Calu3 (cell line): ENCODE measurements at regions of chr12 and their contacts with region 1.

Region 1: DNA sequence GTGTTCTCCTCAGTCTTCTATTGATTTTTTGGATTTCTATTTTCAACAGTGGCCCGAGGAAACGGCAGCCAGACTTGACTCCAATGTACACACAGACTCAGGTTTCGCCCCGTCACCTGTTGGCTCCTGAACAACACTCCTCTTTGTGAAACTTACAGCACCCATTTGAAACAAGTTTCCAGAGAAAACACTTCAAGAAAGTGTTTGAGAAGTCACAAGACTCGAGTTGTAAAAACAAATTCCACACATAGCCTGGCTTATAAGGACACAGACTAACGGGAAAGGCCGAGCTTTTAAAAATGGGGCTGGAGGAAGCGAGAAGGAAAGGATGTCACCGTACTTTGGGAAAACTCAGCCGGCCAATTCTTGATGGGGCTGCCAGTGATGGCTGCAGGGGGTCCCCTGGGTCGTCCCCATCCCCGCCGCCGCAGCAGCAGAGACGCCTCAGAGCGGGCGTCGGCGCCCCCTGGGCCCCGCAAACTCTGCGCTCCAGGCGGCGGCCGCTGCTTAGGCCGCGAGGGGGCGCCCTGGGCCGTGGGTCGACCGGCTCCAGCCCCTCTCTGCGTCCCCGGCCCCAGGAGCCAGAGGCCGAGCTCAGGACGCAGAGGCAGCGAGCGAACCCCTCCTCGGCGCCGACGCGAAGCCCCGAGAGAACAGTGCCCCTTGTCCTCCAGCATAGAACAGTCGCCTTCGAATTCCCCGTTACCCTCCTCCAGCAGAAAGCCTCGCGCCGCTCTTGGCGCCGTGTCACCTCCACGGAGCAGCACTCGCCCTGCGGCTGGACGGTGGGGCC is 106.9 kb downstream of the PRICKLE1 start:
- DNase-seq: peak; percentile 86
- H3K4me3 Mint-ChIP-seq: peak overlapping the region; percentile 96
- H3K27ac Mint-ChIP-seq: peak overlapping the region; percentile 66
- H3K4me1 Mint-ChIP-seq: peaks cover 9% of the 10 kb centered on the region
- H3K27me3 Mint-ChIP-seq: no peaks in the 10 kb centered on the region
- CTCF ChIP-seq: peak; percentile 59

Region 2: GRCh38 chr12:42504049-42504448 is 21.4 kb after region 1 on chr12:
- CTCF ChIA-PET with region 1: no interaction called
- intact Hi-C with region 1: no loop called
- DNase-seq: peak; percentile 4
- H3K4me3 Mint-ChIP-seq: no peak overlapping the region
- H3K27ac Mint-ChIP-seq: no peak overlapping the region
- H3K4me1 Mint-ChIP-seq: no peaks in the 10 kb centered on the region
- H3K27me3 Mint-ChIP-seq: no peaks in the 10 kb centered on the region
- CTCF ChIP-seq: no peak

Region 3: GRCh38 chr12:42524716-42525115 is 42.1 kb after region 1 on chr12:
- CTCF ChIA-PET with region 1: no interaction called
- intact Hi-C with region 1: no loop called
- DNase-seq: no peak
- H3K4me3 Mint-ChIP-seq: no peak overlapping the region
- H3K27ac Mint-ChIP-seq: no peak overlapping the region
- H3K4me1 Mint-ChIP-seq: no peaks in the 10 kb centered on the region
- H3K27me3 Mint-ChIP-seq: no peaks in the 10 kb centered on the region
- CTCF ChIP-seq: no peak

Region 4: GRCh38 chr12:42568952-42569915 is 86.6 kb after region 1 on chr12:
- CTCF ChIA-PET with region 1: interaction called, 20 read pairs
- intact Hi-C with region 1: loop called (anchors 2 kb)
- DNase-seq: no peak
- H3K4me3 Mint-ChIP-seq: no peak overlapping the region
- H3K27ac Mint-ChIP-seq: no peak overlapping the region
- H3K4me1 Mint-ChIP-seq: peaks cover 12% of the 10 kb centered on the region
- H3K27me3 Mint-ChIP-seq: no peaks in the 10 kb centered on the region
- CTCF ChIP-seq: no peak

Region 5: DNA sequence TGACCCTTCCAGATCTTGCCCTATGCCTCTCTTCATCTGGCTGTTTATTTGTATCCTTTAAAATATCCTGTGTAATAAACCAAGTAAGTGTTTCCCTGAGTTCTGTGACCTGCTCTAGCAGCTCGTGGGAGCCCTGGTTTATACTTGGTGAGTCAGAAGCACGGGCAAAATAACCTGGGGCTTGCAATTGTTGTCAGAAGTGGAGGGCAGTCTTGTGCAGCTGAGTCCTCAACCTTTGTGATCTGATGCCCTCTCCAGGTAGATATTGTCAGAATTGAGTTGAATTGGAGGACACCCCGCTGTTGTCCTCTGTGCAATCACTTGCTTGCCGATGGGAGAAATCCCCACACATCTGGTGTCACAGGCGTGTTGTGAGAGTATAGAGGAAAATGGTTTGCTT is 169.4 kb after region 1 on chr12:
- CTCF ChIA-PET with region 1: no interaction called
- intact Hi-C with region 1: no loop called
- DNase-seq: no peak
- H3K4me3 Mint-ChIP-seq: no peak overlapping the region
- H3K27ac Mint-ChIP-seq: no peak overlapping the region
- H3K4me1 Mint-ChIP-seq: no peaks in the 10 kb centered on the region
- H3K27me3 Mint-ChIP-seq: no peaks in the 10 kb centered on the region
- CTCF ChIP-seq: no peak